GM12878 (cell line): ENCODE measurements at regions of chr19 and their contacts with region 1.

Region 1: GRCh38 chr19:45137179-45137761 is 23.5 kb downstream of the NKPD1 start:
- DNase-seq: peak; percentile 93
- ATAC-seq: peak; percentile 95
- H3K4me3 ChIP-seq: peak overlapping the region; percentile 39; the same call in 1 of the 2 replicates
- H3K27ac ChIP-seq: peak overlapping the region; percentile 97
- H3K4me1 ChIP-seq: peaks cover 51% of the 10 kb centered on the region
- H3K27me3 ChIP-seq: no peaks in the 10 kb centered on the region
- CTCF ChIP-seq: peak in 2 of 3 experiments; percentile 14 to 29; a peak in 2 of 6 replicates
- EP300 ChIP-seq: peak in 1 of 2 experiments; percentile 81; a peak in 2 of 4 replicates
- POLR2A ChIP-seq: peak; percentile 47; the same call in 1 of the 2 replicates
- RAD21 ChIP-seq: no peak

Region 2: GRCh38 chr19:45016388-45017319 is 120.6 kb before region 1 on chr19:
- CTCF ChIA-PET with region 1: interaction called, 4 read pairs
- POLR2A ChIA-PET with region 1: interaction called, 4 read pairs
- RAD21 ChIA-PET with region 1: no interaction called
- SMC1A ChIA-PET with region 1: no interaction called
- in situ Hi-C with region 1: no loop called
- intact Hi-C with region 1: loop called (anchors 2 kb)
- DNase-seq: peak; percentile 94
- ATAC-seq: peak; percentile 91
- H3K4me3 ChIP-seq: peak overlapping the region; percentile 60
- H3K27ac ChIP-seq: peak overlapping the region; percentile 89
- H3K4me1 ChIP-seq: peaks cover 20% of the 10 kb centered on the region
- H3K27me3 ChIP-seq: no peaks in the 10 kb centered on the region
- CTCF ChIP-seq: peak; percentile 74 to 81 (median 79)
- EP300 ChIP-seq: peak; percentile 75 to 91; a peak in 3 of 4 replicates
- POLR2A ChIP-seq: no peak; the same call in 1 of the 2 replicates
- RAD21 ChIP-seq: peak; percentile 87

Region 3: DNA sequence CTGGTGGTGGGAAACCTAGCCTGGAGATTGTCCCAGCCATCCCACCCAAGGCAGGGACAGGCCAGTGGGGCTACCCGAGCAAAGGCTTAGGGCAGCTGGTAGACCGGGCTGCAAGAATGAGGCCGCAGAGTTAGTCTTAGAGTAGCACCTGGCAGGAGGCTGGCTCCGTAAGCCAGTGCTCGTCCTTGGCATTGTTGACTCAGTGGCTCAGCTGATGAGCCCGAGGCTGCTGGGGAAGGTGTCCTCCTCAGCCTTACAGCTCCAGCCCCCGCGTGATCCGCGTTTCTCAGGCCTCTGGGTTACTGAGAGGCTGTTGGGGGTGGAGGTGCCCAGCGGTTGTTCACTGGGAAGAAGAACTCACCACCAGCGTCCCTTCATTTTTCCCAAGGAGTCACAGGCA is 19.6 kb before region 1 on chr19:
- CTCF ChIA-PET with region 1: interaction called, 16 read pairs
- POLR2A ChIA-PET with region 1: interaction called, 18 read pairs
- RAD21 ChIA-PET with region 1: interaction called, 12 read pairs
- SMC1A ChIA-PET with region 1: interaction called, 6 read pairs
- in situ Hi-C with region 1: no loop called
- intact Hi-C with region 1: no loop called
- DNase-seq: no peak
- ATAC-seq: peak; percentile 11
- H3K4me3 ChIP-seq: no peak overlapping the region
- H3K27ac ChIP-seq: peak overlapping the region; percentile 66; the same call in 1 of the 2 replicates
- H3K4me1 ChIP-seq: peaks cover 84% of the 10 kb centered on the region
- H3K27me3 ChIP-seq: no peaks in the 10 kb centered on the region
- CTCF ChIP-seq: no peak
- EP300 ChIP-seq: no peak
- POLR2A ChIP-seq: no peak
- RAD21 ChIP-seq: no peak

Region 4: GRCh38 chr19:45164577-45165335 is 27.5 kb after region 1 on chr19:
- CTCF ChIA-PET with region 1: interaction called, 18 read pairs
- POLR2A ChIA-PET with region 1: interaction called, 17 read pairs
- RAD21 ChIA-PET with region 1: interaction called, 15 read pairs
- SMC1A ChIA-PET with region 1: interaction called, 17 read pairs
- in situ Hi-C with region 1: no loop called
- intact Hi-C with region 1: loop called (anchors 1 kb)
- DNase-seq: peak; percentile 64
- ATAC-seq: peak; percentile 92
- H3K4me3 ChIP-seq: no peak overlapping the region
- H3K27ac ChIP-seq: peak overlapping the region; percentile 64; the same call in 1 of the 2 replicates
- H3K4me1 ChIP-seq: peaks cover 18% of the 10 kb centered on the region
- H3K27me3 ChIP-seq: no peaks in the 10 kb centered on the region; a peak in 1 of 4 replicates
- CTCF ChIP-seq: peak; percentile 8 to 33 (median 32); a peak in 3 of 6 replicates
- EP300 ChIP-seq: no peak
- POLR2A ChIP-seq: no peak
- RAD21 ChIP-seq: no peak

Region 5: DNA sequence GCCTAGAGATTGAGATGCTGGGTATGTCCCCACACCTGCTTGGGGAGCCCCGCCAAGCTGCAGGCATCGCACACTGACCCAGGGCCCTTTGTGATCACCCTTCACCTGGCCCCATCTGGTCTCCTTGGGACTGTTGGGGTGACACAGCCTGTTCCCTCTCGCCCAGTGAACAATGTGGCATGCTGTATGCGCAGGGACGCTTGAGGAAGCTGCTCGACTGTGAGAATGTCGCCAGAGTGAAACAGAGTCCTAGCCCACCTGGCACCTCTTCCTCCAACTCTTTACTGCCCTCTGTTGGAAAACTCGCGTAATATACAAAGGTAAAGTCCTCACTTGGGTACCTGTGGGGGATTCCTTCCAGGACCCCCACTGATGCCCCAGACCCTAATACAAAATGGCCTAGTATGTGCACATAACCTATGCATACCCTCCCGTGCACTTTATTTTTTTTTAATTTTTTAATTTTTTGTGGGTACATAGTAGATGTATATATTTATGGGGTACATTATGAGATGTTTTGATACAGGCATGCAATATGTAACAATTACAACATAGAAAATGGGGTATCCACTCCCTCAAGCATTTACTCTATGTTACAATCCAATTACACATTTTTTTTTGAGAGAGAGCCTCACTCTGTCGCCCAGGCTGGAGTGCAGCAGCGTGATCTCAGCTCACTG is 50.3 kb after region 1 on chr19:
- CTCF ChIA-PET with region 1: interaction called, 11 read pairs
- POLR2A ChIA-PET with region 1: interaction called, 5 read pairs
- RAD21 ChIA-PET with region 1: interaction called, 5 read pairs
- SMC1A ChIA-PET with region 1: interaction called, 5 read pairs
- in situ Hi-C with region 1: no loop called
- intact Hi-C with region 1: no loop called
- DNase-seq: no peak
- ATAC-seq: peak; percentile 90
- H3K4me3 ChIP-seq: no peak overlapping the region
- H3K27ac ChIP-seq: no peak overlapping the region
- H3K4me1 ChIP-seq: peaks cover 3% of the 10 kb centered on the region; the same call in 1 of the 2 replicates
- H3K27me3 ChIP-seq: no peaks in the 10 kb centered on the region
- CTCF ChIP-seq: peak; percentile 67 to 73 (median 69)
- EP300 ChIP-seq: no peak
- POLR2A ChIP-seq: no peak
- RAD21 ChIP-seq: peak; percentile 78

Region 6: DNA sequence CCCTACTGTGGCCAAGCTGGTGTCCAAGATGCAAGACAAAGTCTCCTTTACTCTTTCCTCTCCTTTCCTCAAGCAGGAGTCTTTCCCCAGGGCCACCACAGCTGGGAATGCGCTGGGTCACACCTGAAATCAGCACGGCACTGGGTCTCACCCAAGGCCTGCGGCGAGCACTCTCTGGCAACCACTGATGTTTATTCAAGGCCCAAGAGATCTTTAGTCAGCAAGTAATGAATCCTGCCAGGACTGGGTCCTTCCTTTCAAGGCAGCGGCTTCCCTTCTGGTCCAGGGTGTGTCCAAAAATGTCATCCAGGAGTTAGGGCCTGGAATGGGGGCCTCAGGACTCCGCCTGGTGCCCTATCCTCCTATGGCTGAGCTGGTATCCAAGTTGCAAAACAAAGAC is 65.4 kb after region 1 on chr19:
- CTCF ChIA-PET with region 1: no interaction called
- POLR2A ChIA-PET with region 1: no interaction called
- RAD21 ChIA-PET with region 1: no interaction called
- SMC1A ChIA-PET with region 1: no interaction called
- in situ Hi-C with region 1: no loop called
- intact Hi-C with region 1: no loop called
- DNase-seq: no peak
- ATAC-seq: no peak
- H3K4me3 ChIP-seq: no peak overlapping the region
- H3K27ac ChIP-seq: no peak overlapping the region
- H3K4me1 ChIP-seq: no peaks in the 10 kb centered on the region
- H3K27me3 ChIP-seq: no peaks in the 10 kb centered on the region
- CTCF ChIP-seq: no peak
- EP300 ChIP-seq: no peak
- POLR2A ChIP-seq: no peak
- RAD21 ChIP-seq: no peak

Region 7: GRCh38 chr19:45215383-45216191 is 78.3 kb after region 1 on chr19:
- CTCF ChIA-PET with region 1: no interaction called
- POLR2A ChIA-PET with region 1: no interaction called
- RAD21 ChIA-PET with region 1: no interaction called
- SMC1A ChIA-PET with region 1: no interaction called
- in situ Hi-C with region 1: no loop called
- intact Hi-C with region 1: no loop called
- DNase-seq: no peak
- ATAC-seq: no peak
- H3K4me3 ChIP-seq: no peak overlapping the region
- H3K27ac ChIP-seq: no peak overlapping the region
- H3K4me1 ChIP-seq: no peaks in the 10 kb centered on the region
- H3K27me3 ChIP-seq: peaks cover 2 to 3% of the 10 kb centered on the region in 2 experiments
- CTCF ChIP-seq: no peak
- EP300 ChIP-seq: no peak
- POLR2A ChIP-seq: no peak
- RAD21 ChIP-seq: no peak

Region 8: DNA sequence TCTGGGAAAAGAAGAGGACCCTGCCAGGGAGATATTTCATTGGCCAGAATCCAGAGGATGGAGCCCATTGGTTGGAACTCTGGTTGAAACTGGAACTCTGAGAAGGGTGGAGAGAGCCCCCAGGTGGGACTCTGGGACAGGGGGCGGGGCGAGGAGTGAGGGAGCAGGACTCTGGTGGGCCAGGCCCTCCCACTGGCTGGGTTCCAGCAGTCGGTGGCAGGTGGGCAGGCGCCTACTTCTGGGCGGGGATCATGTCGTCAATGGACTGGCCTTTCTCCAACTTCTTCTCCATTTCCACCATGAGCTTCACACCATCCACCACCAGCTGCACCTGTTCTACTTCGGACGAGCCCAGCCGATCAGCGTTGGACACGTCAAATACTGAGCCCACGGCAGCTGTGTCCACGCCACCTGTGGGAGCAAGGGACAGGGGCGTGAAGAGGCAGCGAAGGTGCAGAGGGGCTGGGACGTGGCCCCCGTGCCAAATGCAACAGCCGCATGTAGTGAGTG is 169.3 kb after region 1 on chr19:
- CTCF ChIA-PET with region 1: no interaction called
- POLR2A ChIA-PET with region 1: no interaction called
- RAD21 ChIA-PET with region 1: no interaction called
- SMC1A ChIA-PET with region 1: no interaction called
- in situ Hi-C with region 1: no loop called
- intact Hi-C with region 1: no loop called
- DNase-seq: no peak
- ATAC-seq: no peak
- H3K4me3 ChIP-seq: no peak overlapping the region
- H3K27ac ChIP-seq: no peak overlapping the region
- H3K4me1 ChIP-seq: no peaks in the 10 kb centered on the region
- H3K27me3 ChIP-seq: no peaks in the 10 kb centered on the region
- CTCF ChIP-seq: no peak
- EP300 ChIP-seq: no peak
- POLR2A ChIP-seq: no peak
- RAD21 ChIP-seq: no peak